ENCODE measurements at regions of chr1 and their contacts with region 1.

Region 1: GRCh38 chr1:236888903-236889302 is 93.8 kb downstream of the MTR start:
- DNase-seq: no peak
- H3K4me3 ChIP-seq: no peak overlapping the region
- H3K27ac ChIP-seq: peak overlapping the region; percentile 82 to 85 (median 82)
- H3K4me1 ChIP-seq: peaks cover 38 to 69% (median 61%) of the 10 kb centered on the region in 4 donors
- H3K27me3 ChIP-seq: no peaks in the 10 kb centered on the region
- CTCF ChIP-seq: no peak
- EP300 ChIP-seq: no peak
- POLR2A ChIP-seq: no peak

Region 2: GRCh38 chr1:237032029-237032428 is 143.1 kb after region 1 on chr1:
- intact Hi-C with region 1: loop called (anchors 10 kb)
- DNase-seq: peak; percentile 81
- H3K4me3 ChIP-seq: no peak overlapping the region
- H3K27ac ChIP-seq: peak overlapping the region in 3 of 4 donors; percentile 41 to 65 (median 64)
- H3K4me1 ChIP-seq: peaks cover 9 to 38% (median 26%) of the 10 kb centered on the region in 4 donors
- H3K27me3 ChIP-seq: no peaks in the 10 kb centered on the region
- CTCF ChIP-seq: no peak
- EP300 ChIP-seq: no peak
- POLR2A ChIP-seq: no peak

Region 3: DNA sequence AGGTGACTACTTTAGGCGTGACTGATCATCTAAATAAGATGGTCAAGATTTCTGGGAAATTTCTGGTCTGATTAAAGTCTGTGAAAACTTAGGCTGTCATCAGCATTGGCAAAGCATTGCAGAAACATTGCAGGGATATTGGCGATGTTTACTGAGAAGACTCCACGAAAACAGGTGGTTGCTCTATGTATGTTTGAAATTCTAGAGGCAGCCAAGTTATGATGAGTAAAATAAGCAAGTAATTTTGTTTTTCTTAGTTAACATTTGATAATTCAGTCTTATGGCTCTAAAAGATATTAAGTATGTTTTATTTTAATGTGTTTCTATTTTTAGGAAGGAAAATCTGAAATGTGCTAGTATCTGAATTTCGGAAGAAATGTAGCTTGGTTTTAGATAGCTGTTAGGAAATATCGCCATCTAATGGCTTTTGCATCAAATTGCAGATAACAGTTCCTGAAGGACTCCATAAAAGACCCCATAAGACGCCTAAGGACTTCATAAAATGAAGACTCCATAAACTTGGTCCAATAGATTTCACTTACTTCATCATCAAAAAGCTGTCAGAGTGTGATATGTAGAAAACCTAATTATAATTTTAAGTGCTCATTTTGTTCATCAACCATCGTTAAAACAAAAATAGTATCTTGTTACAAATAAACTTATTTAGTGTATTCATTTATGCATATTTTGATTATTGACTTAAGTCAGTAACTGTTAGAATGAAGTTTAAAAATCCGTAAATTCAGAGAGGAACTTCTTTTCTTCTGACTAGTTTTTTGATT is 497.6 kb after region 1 on chr1:
- intact Hi-C with region 1: loop called (anchors 5 kb)
- DNase-seq: no peak
- H3K4me3 ChIP-seq: no peak overlapping the region
- H3K27ac ChIP-seq: peak overlapping the region in 1 of 4 donors; percentile 1
- H3K4me1 ChIP-seq: peaks cover 8 to 23% (median 19%) of the 10 kb centered on the region in 4 donors
- H3K27me3 ChIP-seq: no peaks in the 10 kb centered on the region
- CTCF ChIP-seq: peak; percentile 75 to 77 (median 76)
- EP300 ChIP-seq: no peak
- POLR2A ChIP-seq: no peak